A673 (cell line): ENCODE measurements at regions of chr20 and their contacts with region 1.

Region 1: DNA sequence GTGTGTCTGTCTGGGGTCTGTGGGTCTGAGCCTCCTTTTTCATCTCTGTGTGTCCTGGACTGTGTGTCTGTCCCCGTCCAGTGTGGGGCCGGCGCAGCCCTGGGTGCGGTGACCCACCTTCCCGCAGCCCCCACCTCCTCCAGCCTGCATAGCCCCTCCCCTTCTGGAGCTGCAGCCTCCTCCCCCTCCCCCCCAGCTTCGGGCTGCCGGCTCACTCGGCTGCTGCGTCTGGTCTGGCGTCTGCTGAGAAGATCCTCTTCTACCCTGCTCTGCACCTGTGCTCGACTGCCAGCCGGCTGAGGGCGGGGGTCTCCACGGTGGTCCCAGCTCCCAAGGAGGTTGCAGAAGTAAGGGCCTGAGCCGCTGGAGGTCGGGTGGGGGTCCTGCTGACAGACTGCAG is 7.6 kb upstream of the LKAAEAR1 start:
- DNase-seq: no peak
- H3K4me3 ChIP-seq: no peak overlapping the region
- H3K27ac ChIP-seq: no peak overlapping the region
- H3K4me1 ChIP-seq: no peaks in the 10 kb centered on the region
- H3K27me3 ChIP-seq: no peaks in the 10 kb centered on the region
- CTCF ChIP-seq: no peak

Region 2: DNA sequence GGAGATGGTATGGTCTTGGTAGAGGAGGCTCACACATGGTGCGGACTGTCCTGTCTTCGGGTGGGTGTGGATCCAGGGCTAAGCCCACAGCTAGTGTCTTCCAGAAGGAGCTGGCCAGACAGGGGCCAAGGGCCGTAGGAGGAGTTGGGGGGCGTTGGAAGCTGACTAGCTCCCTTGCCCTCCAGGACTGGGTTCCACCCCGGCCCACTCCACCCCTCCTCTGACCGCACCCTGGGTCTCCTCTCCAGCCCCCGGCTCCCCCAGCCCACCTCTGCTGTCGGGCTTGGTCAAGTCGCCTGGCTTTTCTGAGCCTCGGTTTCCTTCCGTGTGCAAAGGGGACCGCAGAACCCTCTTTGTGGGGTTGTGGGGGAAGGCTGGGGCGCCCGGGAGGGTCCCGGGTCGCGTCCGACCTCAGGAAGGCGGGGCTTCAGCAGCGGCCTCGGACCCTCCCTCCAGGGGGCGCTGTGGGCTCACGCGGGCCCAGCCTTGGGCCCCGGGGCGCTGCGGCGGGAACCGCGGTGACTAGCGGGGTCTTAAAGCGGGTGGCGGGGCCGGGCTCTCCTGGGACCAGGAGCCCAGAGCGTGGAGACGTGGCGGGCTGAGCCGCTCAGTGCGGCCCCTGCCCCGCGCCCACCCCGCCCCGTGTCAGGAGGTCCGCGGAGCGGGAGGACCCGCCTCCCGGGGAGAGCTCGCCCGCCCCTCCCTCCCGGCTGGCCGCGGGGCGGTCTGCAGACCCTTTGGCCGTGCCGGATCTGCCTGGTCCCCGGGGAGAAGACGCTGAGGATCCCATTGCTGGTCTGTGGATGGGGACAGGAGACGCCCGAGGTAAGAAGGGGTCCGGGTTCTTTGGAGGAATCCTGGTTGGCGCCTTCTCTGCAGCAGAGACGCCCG is 10.2 kb after region 1 on chr20:
- CTCF ChIA-PET with region 1: interaction called, 10 read pairs
- POLR2A ChIA-PET with region 1: no interaction called
- intact Hi-C with region 1: no loop called
- DNase-seq: peak; percentile 61
- H3K4me3 ChIP-seq: peak overlapping the region; percentile 28
- H3K27ac ChIP-seq: no peak overlapping the region
- H3K4me1 ChIP-seq: no peaks in the 10 kb centered on the region
- H3K27me3 ChIP-seq: peaks cover 30% of the 10 kb centered on the region
- CTCF ChIP-seq: peak; percentile 82